Sigmoid colon (tissue), 7 donors: ENCODE measurements at regions of chr19 and their contacts with region 1.

Region 1: GRCh38 chr19:5680437-5681368 is at the starts of genes HSD11B1L and MICOS13:
- DNase-seq: peak; percentile 99
- H3K4me3 ChIP-seq: peak within 1 kb of the TSS; percentile 79 to 97 (median 88)
- H3K27ac ChIP-seq: peak within 1 kb of the TSS; percentile 89 to 98 (median 92)
- H3K4me1 ChIP-seq: peaks cover 0 to 18% (median 16%) of the 10 kb centered on the region in 4 donors
- H3K27me3 ChIP-seq: no peaks in the 10 kb centered on the region
- CTCF ChIP-seq: no peak
- EP300 ChIP-seq: no peak
- POLR2A ChIP-seq: no peak
- total RNA-seq, gene HSD11B1L: 19.9 to 37.1 (median 23.3) TPM
- total RNA-seq, gene MICOS13: 39.6 to 87.8 (median 61.7) TPM

Region 2: DNA sequence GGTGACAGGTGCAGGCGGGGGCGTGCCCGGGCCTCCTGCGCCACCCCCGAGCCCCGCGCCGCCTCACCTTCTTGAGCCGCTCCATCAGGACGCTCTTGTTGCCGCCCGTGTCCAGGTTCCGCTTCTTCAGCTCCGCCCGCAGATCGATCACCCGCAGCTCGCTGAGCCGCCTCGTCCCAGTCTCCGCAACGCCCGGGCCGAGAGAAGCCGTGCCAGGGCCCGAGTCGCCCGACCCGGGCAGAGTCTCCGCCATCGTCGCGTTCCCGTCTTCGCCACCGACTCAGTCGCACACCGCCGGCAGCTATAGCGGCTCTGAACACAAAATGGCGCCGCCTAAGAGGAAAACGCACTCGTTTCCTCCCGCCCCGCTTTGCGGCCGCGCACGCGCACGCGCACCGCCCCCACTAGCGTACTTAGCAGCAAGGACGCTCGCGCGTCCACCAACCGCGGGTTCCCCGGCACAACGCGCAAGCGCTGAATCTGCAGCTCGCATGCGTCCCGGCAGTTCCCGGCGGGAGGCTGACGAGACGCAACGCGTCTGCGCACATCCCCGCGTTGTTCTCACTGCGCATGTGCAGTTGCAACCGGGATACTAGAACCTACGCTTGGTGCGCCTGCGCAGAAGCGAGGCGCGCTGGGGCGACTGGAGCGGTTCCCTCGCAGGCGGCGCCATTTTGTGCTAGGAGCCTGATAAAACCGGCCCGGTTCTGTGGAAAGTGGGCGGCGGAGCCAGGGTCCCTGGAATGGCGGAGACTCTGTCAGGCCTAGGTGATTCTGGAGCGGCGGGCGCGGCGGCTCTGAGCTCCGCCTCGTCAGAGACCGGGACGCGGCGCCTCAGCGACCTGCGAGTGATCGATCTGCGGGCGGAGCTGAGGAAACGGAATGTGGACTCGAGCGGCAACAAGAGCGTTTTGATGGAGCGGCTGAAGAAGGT is 58.0 kb before region 1 on chr19 and contains the starts of genes SAFB and SAFB2:
- intact Hi-C with region 1: loop called (anchors 2 kb)
- DNase-seq: peak; percentile 100
- H3K4me3 ChIP-seq: peak within 1 kb of the TSS; percentile 78 to 95 (median 88)
- H3K27ac ChIP-seq: peak within 1 kb of the TSS; percentile 95 to 99 (median 98)
- H3K4me1 ChIP-seq: peaks cover 0 to 72% (median 67%) of the 10 kb centered on the region in 4 donors
- H3K27me3 ChIP-seq: no peaks in the 10 kb centered on the region
- CTCF ChIP-seq: no peak
- EP300 ChIP-seq: peak in 1 of 4 donors; percentile 14
- POLR2A ChIP-seq: peak; percentile 95 to 96
- total RNA-seq, gene SAFB: 48.9 to 75.9 (median 60.4) TPM
- total RNA-seq, gene SAFB2: 22.8 to 80.0 (median 38.1) TPM